Heart left ventricle (tissue), 16 donors: ENCODE measurements at regions of chr9 and their contacts with region 1.

Region 1: GRCh38 chr9:36873247-36873875 is 160.7 kb downstream of the PAX5 start:
- DNase-seq: peak; percentile 44 to 73 (median 60)
- ATAC-seq: peak; percentile 55 to 83 (median 76)
- H3K4me3 ChIP-seq: no peak overlapping the region
- H3K27ac ChIP-seq: no peak overlapping the region
- H3K4me1 ChIP-seq: no peaks in the 10 kb centered on the region
- H3K27me3 ChIP-seq: peaks cover 0 to 22% (median 2%) of the 10 kb centered on the region in 9 donors
- CTCF ChIP-seq: peak; percentile 73 to 89 (median 80)
- POLR2A ChIP-seq: no peak

Region 2: GRCh38 chr9:36980148-36980974 is 107.0 kb after region 1 on chr9:
- intact Hi-C with region 1: no loop called
- DNase-seq: no peak
- ATAC-seq: no peak
- H3K4me3 ChIP-seq: no peak overlapping the region
- H3K27ac ChIP-seq: no peak overlapping the region
- H3K4me1 ChIP-seq: no peaks in the 10 kb centered on the region
- H3K27me3 ChIP-seq: peaks cover 11 to 94% (median 36%) of the 10 kb centered on the region in 9 donors
- CTCF ChIP-seq: no peak
- POLR2A ChIP-seq: no peak

Region 3: GRCh38 chr9:37251452-37251851 is 378.1 kb after region 1 on chr9:
- intact Hi-C with region 1: loop called in 2 of 10 experiments (anchors 10 kb)
- DNase-seq: no peak
- ATAC-seq: no peak
- H3K4me3 ChIP-seq: no peak overlapping the region
- H3K27ac ChIP-seq: no peak overlapping the region
- H3K4me1 ChIP-seq: peaks cover 0 to 5% (median 0%) of the 10 kb centered on the region in 12 donors
- H3K27me3 ChIP-seq: no peaks in the 10 kb centered on the region
- CTCF ChIP-seq: no peak
- POLR2A ChIP-seq: no peak

Region 4: GRCh38 chr9:37262410-37262809 is 389.0 kb after region 1 on chr9:
- intact Hi-C with region 1: loop called in 5 of 10 experiments (anchors 5 to 10 kb)
- DNase-seq: no peak
- ATAC-seq: no peak
- H3K4me3 ChIP-seq: no peak overlapping the region
- H3K27ac ChIP-seq: no peak overlapping the region
- H3K4me1 ChIP-seq: no peaks in the 10 kb centered on the region
- H3K27me3 ChIP-seq: no peaks in the 10 kb centered on the region
- CTCF ChIP-seq: peak in 11 of 12 donors; percentile 10 to 53 (median 35)
- POLR2A ChIP-seq: no peak

Region 5: GRCh38 chr9:37333288-37333687 is 459.9 kb after region 1 on chr9:
- intact Hi-C with region 1: loop called in 2 of 10 experiments (anchors 10 kb)
- DNase-seq: no peak
- ATAC-seq: no peak
- H3K4me3 ChIP-seq: no peak overlapping the region
- H3K27ac ChIP-seq: no peak overlapping the region
- H3K4me1 ChIP-seq: peaks cover 0 to 5% (median 0%) of the 10 kb centered on the region in 12 donors
- H3K27me3 ChIP-seq: no peaks in the 10 kb centered on the region
- CTCF ChIP-seq: no peak
- POLR2A ChIP-seq: no peak

Region 6: GRCh38 chr9:37415011-37415719 is 541.8 kb after region 1 on chr9:
- intact Hi-C with region 1: loop called in 1 of 10 experiments (anchors 10 kb)
- DNase-seq: peak in 4 of 5 donors; percentile 45 to 68 (median 60)
- ATAC-seq: peak; percentile 45 to 76 (median 66)
- H3K4me3 ChIP-seq: peak overlapping the region in 1 of 12 donors; percentile 12
- H3K27ac ChIP-seq: peak overlapping the region in 3 of 12 donors; percentile 25 to 37 (median 31)
- H3K4me1 ChIP-seq: peaks cover 0 to 21% (median 6%) of the 10 kb centered on the region in 12 donors
- H3K27me3 ChIP-seq: no peaks in the 10 kb centered on the region
- CTCF ChIP-seq: peak; percentile 72 to 88 (median 80)
- POLR2A ChIP-seq: no peak